ENCODE measurements at regions of chr1 and their contacts with region 1.

Region 1: DNA sequence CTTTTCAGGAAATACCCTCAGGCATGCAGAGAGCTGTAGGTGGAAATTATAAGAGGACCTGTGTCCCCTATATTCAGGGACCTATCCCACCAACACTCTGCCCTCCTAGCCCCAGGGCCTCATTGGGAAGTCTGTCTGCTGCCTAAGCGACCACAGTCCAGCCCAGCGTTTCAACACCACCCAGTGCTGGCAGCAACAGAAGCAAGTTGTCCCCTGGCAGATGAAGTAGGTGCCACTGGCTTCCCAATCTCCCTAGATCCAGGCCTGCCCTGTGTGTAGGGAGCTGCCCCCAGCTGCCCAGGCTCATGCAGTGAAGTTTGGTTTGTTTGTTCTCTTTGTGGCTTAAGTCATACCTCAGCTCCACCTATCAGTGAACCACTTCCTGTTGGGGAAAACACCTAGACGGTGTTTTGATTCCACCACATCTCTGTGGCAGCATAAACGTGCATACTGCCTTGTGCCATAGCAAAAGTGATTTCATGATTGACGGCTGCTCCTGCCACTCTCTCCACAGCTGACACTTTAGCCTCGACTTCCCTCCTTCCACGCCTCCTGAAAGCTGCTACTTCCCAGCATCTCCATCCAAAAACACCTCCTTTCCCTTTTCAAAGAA is 8.1 kb upstream of the LEFTY1 start:
- DNase-seq: peak; percentile 45 to 95 (median 60)
- ATAC-seq: peak; percentile 92
- H3K4me3 ChIP-seq: peak overlapping the region; percentile 26
- H3K4me3 Mint-ChIP-seq: peak overlapping the region; percentile 55
- H3K27ac ChIP-seq: peak overlapping the region; percentile 81 to 90
- H3K27ac Mint-ChIP-seq: peak overlapping the region; percentile 98
- H3K4me1 ChIP-seq: peaks cover 53% of the 10 kb centered on the region
- H3K4me1 Mint-ChIP-seq: peaks cover 60% of the 10 kb centered on the region
- H3K27me3 ChIP-seq: no peaks in the 10 kb centered on the region
- H3K27me3 Mint-ChIP-seq: no peaks in the 10 kb centered on the region
- CTCF ChIP-seq: no peak

Region 2: GRCh38 chr1:225467193-225468020 is 429.6 kb before region 1 on chr1:
- CTCF ChIA-PET with region 1: no interaction called
- POLR2A ChIA-PET with region 1: interaction called, 31 read pairs
- intact Hi-C with region 1: no loop called
- DNase-seq: peak; percentile 67 to 94 (median 79)
- ATAC-seq: peak; percentile 85
- H3K4me3 ChIP-seq: peak overlapping the region; percentile 79
- H3K4me3 Mint-ChIP-seq: peak overlapping the region; percentile 96
- H3K27ac ChIP-seq: peak overlapping the region; percentile 92 to 94
- H3K27ac Mint-ChIP-seq: peak overlapping the region; percentile 99
- H3K4me1 ChIP-seq: peaks cover 56% of the 10 kb centered on the region
- H3K4me1 Mint-ChIP-seq: peaks cover 40% of the 10 kb centered on the region
- H3K27me3 ChIP-seq: no peaks in the 10 kb centered on the region
- H3K27me3 Mint-ChIP-seq: no peaks in the 10 kb centered on the region
- CTCF ChIP-seq: no peak

Region 3: GRCh38 chr1:225817611-225818061 is 79.4 kb before region 1 on chr1:
- CTCF ChIA-PET with region 1: no interaction called
- POLR2A ChIA-PET with region 1: no interaction called
- intact Hi-C with region 1: no loop called
- DNase-seq: no peak
- ATAC-seq: no peak
- H3K4me3 ChIP-seq: no peak overlapping the region
- H3K4me3 Mint-ChIP-seq: no peak overlapping the region
- H3K27ac ChIP-seq: no peak overlapping the region
- H3K27ac Mint-ChIP-seq: no peak overlapping the region
- H3K4me1 ChIP-seq: no peaks in the 10 kb centered on the region
- H3K4me1 Mint-ChIP-seq: no peaks in the 10 kb centered on the region
- H3K27me3 ChIP-seq: no peaks in the 10 kb centered on the region
- H3K27me3 Mint-ChIP-seq: no peaks in the 10 kb centered on the region
- CTCF ChIP-seq: no peak

Region 4: GRCh38 chr1:225866061-225866837 is 30.8 kb before region 1 on chr1:
- CTCF ChIA-PET with region 1: interaction called, 3 read pairs
- POLR2A ChIA-PET with region 1: interaction called, 28 read pairs
- intact Hi-C with region 1: loop called in 1 of 2 experiments (anchors 1 kb)
- DNase-seq: peak; percentile 46 to 87 (median 71)
- ATAC-seq: peak; percentile 93
- H3K4me3 ChIP-seq: peak overlapping the region; percentile 10
- H3K4me3 Mint-ChIP-seq: peak overlapping the region; percentile 56
- H3K27ac ChIP-seq: peak overlapping the region; percentile 51 to 64
- H3K27ac Mint-ChIP-seq: peak overlapping the region; percentile 87
- H3K4me1 ChIP-seq: peaks cover 48% of the 10 kb centered on the region
- H3K4me1 Mint-ChIP-seq: peaks cover 52% of the 10 kb centered on the region
- H3K27me3 ChIP-seq: no peaks in the 10 kb centered on the region
- H3K27me3 Mint-ChIP-seq: no peaks in the 10 kb centered on the region
- CTCF ChIP-seq: no peak

Region 5: DNA sequence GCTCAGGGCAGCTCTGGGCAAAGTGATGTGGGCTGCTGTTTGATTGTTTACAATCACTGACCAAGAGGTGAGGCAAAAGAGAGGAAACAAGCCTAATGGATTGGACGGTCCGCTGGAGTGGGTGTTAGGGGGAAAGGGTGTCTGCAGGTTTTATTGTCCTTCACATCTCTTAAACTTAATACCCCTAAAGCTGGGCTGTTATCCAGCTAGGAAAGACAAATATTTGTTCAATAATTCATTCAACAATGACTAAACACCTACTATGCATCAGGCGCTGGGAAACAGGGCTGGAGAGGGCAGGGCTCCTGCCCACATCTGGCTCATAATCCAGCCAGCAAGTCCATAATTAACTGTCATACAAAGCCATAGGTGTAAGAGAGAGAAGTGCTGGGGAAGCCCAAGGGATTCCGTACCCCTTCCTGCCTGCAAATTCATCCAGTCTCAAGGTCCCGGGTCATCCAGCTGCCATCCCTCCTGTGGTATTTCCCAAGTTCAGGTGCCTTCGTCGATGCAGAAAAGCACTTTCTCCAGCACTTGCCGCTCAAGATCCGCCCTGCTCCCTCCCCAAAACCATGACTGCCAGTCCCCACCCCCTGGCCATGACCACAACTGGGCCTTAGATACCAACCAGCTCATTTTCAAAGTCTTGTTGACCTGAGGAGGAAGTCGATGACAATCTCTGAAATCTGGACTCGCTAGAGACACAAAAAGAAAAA is 25.5 kb before region 1 on chr1:
- CTCF ChIA-PET with region 1: no interaction called
- POLR2A ChIA-PET with region 1: interaction called, 427 read pairs
- intact Hi-C with region 1: loop called in 1 of 2 experiments (anchors 1 kb)
- DNase-seq: peak in 1 of 14 experiments; percentile 40
- ATAC-seq: no peak
- H3K4me3 ChIP-seq: no peak overlapping the region
- H3K4me3 Mint-ChIP-seq: no peak overlapping the region
- H3K27ac ChIP-seq: peak overlapping the region in 1 of 2 donors; percentile 2
- H3K27ac Mint-ChIP-seq: peak overlapping the region; percentile 69
- H3K4me1 ChIP-seq: peaks cover 78% of the 10 kb centered on the region
- H3K4me1 Mint-ChIP-seq: peaks cover 73% of the 10 kb centered on the region
- H3K27me3 ChIP-seq: no peaks in the 10 kb centered on the region
- H3K27me3 Mint-ChIP-seq: no peaks in the 10 kb centered on the region
- CTCF ChIP-seq: no peak

Region 6: DNA sequence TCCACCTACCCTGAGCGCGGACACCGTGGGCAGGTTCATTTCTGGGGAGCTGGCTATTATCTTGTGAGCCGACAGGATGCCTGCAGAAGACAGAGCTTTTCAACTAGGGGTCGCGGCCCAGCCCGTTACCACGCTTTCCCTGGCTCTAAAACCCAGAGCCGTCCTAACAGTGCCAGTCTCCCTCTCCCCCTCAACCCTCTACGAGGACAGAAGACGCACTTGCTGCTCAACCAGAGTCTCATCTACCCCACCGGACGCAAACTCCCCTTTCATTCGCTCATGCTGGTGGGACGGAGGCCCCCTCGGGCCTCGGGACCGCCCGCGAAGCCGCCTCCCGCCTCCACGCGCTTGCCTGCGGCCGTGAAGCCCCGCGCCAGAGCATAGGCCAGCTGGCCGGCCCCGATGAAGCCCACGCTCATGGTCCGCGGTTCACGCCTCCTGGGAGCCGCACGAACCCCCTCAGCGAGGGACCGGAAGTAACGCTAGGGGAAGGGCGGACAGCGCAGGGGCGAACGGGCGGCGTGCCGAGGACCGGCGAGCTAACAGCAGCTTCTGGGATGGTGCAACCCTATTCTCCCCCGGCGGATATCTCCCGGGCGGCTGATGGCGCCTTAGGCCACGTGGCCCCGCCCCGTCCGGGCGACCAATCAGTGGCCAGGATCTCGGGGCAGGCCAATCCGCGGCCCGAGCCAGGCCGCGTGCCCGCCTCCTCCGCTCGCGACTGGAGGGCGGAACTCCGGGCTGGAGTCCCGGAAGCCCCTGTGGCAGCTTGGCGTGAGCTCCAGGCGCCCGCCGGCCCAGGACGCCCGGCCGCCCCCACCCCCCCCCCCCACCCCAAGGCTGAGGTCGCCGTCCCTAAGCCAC is 26.9 kb after region 1 on chr1 and contains the start of gene PYCR2:
- CTCF ChIA-PET with region 1: interaction called, 3 read pairs
- POLR2A ChIA-PET with region 1: interaction called, 59 read pairs
- intact Hi-C with region 1: loop called (anchors 1 to 2 kb)
- DNase-seq: peak; percentile 87 to 98 (median 93)
- ATAC-seq: peak; percentile 98
- H3K4me3 ChIP-seq: peak within 1 kb of the TSS; percentile 95
- H3K4me3 Mint-ChIP-seq: peak within 1 kb of the TSS; percentile 95
- H3K27ac ChIP-seq: peak within 1 kb of the TSS; percentile 79 to 89
- H3K27ac Mint-ChIP-seq: peak within 1 kb of the TSS; percentile 98
- H3K4me1 ChIP-seq: peaks cover 74% of the 10 kb centered on the region
- H3K4me1 Mint-ChIP-seq: peaks cover 54% of the 10 kb centered on the region
- H3K27me3 ChIP-seq: no peaks in the 10 kb centered on the region
- H3K27me3 Mint-ChIP-seq: no peaks in the 10 kb centered on the region
- CTCF ChIP-seq: no peak
- total RNA-seq, gene PYCR2: 24.1 to 26.2 TPM

Measured in CD4-positive, alpha-beta T cell (primary cell).